WTC11 (cell line): ENCODE measurements at regions of chr19 and their contacts with region 1.

Region 1: DNA sequence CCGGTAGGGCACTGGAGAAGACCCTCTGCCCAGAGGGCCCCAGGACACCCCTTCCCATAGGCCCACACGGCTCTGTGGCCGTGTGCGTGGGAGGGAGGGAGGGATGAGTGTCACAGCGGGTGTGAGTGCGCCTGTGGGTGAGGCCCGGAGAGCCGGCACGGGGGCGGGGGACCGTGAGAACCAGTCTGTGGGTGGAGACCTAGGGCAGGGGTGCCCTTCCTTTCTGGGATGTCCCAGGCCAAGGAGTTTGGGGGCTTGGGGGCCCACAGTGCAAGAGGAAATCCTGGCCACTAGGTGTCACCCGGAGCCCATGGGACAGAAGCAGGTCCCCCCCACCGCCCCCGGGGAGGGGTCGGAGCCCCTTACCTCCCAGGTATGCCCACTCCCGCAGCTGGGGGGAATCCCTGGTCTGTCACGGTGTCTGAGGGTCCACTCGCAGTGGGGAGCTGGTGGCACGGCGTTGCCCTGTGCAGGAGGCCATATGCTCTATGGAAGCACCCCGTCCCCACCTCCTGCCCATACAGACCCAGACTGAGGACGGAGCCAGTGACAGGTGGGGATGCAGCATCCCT is 16.0 kb upstream of the SLC7A10 start:
- DNase-seq: peak; percentile 70
- ATAC-seq: peak; percentile 69
- H3K4me3 Mint-ChIP-seq: no peak overlapping the region
- H3K27ac Mint-ChIP-seq: no peak overlapping the region
- H3K4me1 Mint-ChIP-seq: no peaks in the 10 kb centered on the region
- H3K27me3 Mint-ChIP-seq: peaks cover 4% of the 10 kb centered on the region; the same call in 1 of the 2 replicates
- CTCF ChIP-seq: peak; percentile 56; the same call in 1 of the 2 replicates

Region 2: DNA sequence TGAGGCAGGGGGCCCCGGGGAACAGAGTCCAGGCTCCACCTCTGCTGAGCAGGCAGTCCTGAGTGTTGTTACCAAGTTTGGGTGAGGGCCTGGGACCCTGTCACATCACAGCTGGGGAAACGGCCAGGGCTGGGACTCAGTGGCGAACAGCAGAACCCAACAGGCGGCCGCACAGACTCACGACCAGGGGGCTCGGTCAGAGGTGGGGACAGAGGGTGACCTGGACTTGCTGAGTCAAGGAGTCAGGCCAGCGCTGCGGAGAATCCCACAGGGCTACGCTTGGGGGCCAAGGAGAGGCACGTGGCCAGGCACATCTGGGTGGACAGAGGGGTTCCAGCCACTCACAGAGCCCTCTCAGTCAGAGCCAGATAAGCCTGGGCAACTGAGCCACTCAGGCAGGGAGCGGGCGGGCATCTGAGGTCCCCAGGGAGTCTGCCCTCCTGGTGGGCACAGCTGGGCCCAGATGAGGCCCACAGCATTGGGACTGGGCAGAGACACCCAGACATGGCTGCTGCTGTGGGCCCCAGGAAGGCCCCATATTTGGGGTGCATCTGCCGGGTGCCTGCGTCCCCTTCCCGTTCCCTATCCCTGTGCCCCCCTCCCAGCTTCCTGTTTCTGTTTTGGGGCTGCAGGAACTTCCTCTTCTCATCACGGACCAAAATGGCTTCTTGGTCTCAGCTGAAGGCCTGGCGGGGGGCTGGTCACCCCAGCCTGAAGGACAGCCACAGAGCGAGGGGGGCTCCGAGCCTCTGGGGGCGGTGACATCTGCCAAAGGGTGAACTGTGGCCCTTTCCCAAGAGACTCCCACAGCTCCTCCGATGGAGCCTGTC is 26.8 kb after region 1 on chr19:
- CTCF ChIA-PET with region 1: no interaction called
- POLR2A ChIA-PET with region 1: no interaction called
- DNase-seq: no peak
- ATAC-seq: no peak
- H3K4me3 Mint-ChIP-seq: no peak overlapping the region
- H3K27ac Mint-ChIP-seq: no peak overlapping the region
- H3K4me1 Mint-ChIP-seq: peaks cover 6% of the 10 kb centered on the region
- H3K27me3 Mint-ChIP-seq: no peaks in the 10 kb centered on the region
- CTCF ChIP-seq: no peak

Region 3: GRCh38 chr19:33406521-33407139 is 165.0 kb after region 1 on chr19:
- CTCF ChIA-PET with region 1: interaction called, 39 read pairs
- POLR2A ChIA-PET with region 1: no interaction called
- DNase-seq: peak; percentile 92
- ATAC-seq: peak; percentile 86
- H3K4me3 Mint-ChIP-seq: no peak overlapping the region
- H3K27ac Mint-ChIP-seq: peak overlapping the region; percentile 53; the same call in 1 of the 2 replicates
- H3K4me1 Mint-ChIP-seq: peaks cover 4% of the 10 kb centered on the region; the same call in 1 of the 2 replicates
- H3K27me3 Mint-ChIP-seq: no peaks in the 10 kb centered on the region
- CTCF ChIP-seq: peak; percentile 98